ENCODE measurements at regions of chr17 and their contacts with region 1.

Region 1: DNA sequence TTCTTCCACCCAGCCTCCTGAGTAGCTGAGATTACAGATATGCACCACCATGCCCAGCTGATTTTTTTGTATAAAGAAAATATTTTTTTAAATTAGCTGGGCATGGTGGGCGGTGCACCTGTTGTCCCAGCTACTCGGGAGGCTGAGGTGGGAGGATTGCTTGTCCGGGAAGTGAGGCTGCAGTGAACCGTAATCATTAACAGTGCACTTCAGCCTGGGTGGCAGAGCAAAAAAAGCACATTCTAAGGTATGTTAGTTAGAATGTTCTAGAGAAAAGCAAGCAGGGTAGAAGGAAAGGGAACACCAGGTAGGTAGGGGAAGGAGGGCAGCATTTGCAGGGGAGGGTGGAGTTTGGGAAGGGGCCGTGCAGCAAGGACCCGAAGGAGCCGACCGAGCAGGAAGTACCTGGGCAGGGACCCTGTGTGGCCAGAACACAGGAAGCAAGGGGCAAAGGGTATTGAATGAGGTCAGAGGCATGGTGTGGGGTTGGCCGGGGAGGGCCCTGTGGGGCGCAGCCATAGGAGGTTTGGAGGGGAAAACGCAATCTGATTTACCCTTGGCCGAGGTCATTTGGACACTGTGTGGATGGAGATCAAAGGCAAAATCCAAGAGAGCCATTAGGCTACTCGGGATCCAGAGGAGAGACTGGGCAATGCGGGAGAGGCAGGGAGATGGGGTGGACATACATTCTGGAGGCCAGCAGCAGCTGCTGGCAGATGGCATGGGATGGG is 2.3 kb downstream of the C17orf99 start:
- DNase-seq: no peak
- ATAC-seq: no peak
- H3K4me3 Mint-ChIP-seq: no peak overlapping the region
- H3K27ac Mint-ChIP-seq: peak overlapping the region in 5 of 10 donors; percentile 16 to 89 (median 44)
- H3K4me1 Mint-ChIP-seq: peaks cover 10 to 50% (median 26%) of the 10 kb centered on the region in 4 donors
- H3K27me3 Mint-ChIP-seq: no peaks in the 10 kb centered on the region

Region 2: GRCh38 chr17:78088529-78088928 is 59.9 kb before region 1 on chr17:
- POLR2A ChIA-PET with region 1: interaction called, 10 read pairs
- DNase-seq: no peak
- ATAC-seq: no peak
- H3K4me3 Mint-ChIP-seq: no peak overlapping the region
- H3K27ac Mint-ChIP-seq: peak overlapping the region in 4 of 10 donors; percentile 32 to 71 (median 52)
- H3K4me1 Mint-ChIP-seq: peaks cover 0 to 3% (median 2%) of the 10 kb centered on the region in 4 donors
- H3K27me3 Mint-ChIP-seq: no peaks in the 10 kb centered on the region

Region 3: DNA sequence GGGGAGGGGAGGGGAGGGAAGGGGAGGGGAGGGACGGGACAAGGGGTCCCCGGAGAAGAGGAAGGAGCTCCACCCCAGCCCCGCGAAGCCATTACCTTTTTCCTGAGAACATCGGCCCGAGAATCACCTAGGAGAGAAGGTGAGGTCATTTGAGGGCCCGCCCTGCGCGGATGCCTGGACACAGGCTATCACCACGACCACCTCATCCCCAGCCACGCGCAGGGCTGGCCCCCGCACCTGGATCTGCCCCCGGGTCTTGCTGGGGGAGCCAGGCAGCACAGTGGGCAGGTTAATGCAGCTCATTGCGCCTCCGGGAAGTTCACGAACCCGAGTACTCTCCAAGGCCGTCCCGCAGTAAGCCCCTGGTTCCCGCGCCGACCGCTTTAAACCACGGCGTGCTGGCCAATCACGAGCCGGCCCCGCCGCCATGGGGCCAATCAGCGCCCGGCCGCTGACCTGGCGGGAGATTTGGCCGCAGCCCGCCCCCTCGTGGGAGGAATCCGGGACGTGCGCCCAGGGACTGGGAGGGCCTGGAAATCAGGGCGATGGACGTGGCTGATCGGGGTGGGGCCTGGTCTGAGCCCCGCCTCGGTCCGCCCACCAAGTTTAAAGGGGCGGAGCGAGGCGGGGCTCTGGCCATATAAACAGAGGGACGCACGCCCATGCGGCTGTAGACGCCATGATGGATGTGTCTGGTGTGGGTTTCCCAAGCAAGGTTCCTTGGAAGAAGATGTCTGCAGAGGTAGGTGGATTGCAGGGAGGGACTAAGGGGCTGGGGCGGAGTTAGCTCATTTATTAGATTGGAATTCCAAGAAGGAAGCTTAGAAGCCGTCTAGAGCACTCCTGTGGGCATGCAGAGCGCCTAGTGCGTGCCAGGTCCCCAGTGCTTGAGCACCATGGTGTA is 38.5 kb after region 1 on chr17 and contains the starts of genes AFMID and TK1:
- POLR2A ChIA-PET with region 1: no interaction called
- DNase-seq: peak; percentile 52 to 77 (median 64)
- ATAC-seq: peak; percentile 91 to 94
- H3K4me3 Mint-ChIP-seq: peak within 1 kb of the TSS; percentile 73 to 89 (median 85)
- H3K27ac Mint-ChIP-seq: peak within 1 kb of the TSS in 6 of 10 donors; percentile 10 to 70 (median 58)
- H3K4me1 Mint-ChIP-seq: peaks cover 5 to 17% (median 10%) of the 10 kb centered on the region in 4 donors
- H3K27me3 Mint-ChIP-seq: no peaks in the 10 kb centered on the region
- polyA plus RNA-seq, gene AFMID: 0.41 to 1.7 (median 1.6) TPM
- polyA plus RNA-seq, gene TK1: 0.18 to 1.1 TPM in 2 of 3 donors, not detected in the other

Measured in naive thymus-derived CD8-positive, alpha-beta T cell (primary cell).